CD4-positive, alpha-beta T cell (primary cell): ENCODE measurements at regions of chr13 and their contacts with region 1.

Region 1: GRCh38 chr13:94549232-94550061 is 46.5 kb downstream of the TGDS start:
- DNase-seq: peak; percentile 85 to 96 (median 92)
- ATAC-seq: peak; percentile 91
- H3K4me3 ChIP-seq: peak overlapping the region; percentile 75
- H3K4me3 Mint-ChIP-seq: peak overlapping the region; percentile 96
- H3K27ac ChIP-seq: peak overlapping the region; percentile 85 to 91
- H3K27ac Mint-ChIP-seq: peak overlapping the region; percentile 98
- H3K4me1 ChIP-seq: peaks cover 28% of the 10 kb centered on the region
- H3K4me1 Mint-ChIP-seq: peaks cover 22% of the 10 kb centered on the region
- H3K27me3 ChIP-seq: no peaks in the 10 kb centered on the region
- H3K27me3 Mint-ChIP-seq: peaks cover 7% of the 10 kb centered on the region
- CTCF ChIP-seq: no peak

Region 2: DNA sequence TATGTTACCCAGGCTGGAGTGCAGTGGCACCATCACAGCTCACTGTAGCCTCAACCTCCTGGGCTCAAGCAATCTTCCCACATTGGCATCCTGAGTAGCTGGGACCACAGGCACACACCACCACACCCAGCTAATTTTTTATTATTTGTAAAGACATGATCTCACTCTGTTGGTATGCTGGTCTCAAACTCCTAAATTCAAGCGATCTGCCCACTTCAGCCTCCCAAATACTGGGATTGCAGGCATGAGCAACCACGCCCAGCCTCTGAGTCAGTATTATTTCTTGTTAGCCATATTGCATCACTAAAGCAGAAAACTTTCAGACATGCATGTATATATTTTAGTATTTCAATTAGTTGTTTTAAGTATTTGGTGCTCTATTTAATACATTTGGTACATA is 946.4 kb before region 1 on chr13:
- CTCF ChIA-PET with region 1: no interaction called
- POLR2A ChIA-PET with region 1: no interaction called
- intact Hi-C with region 1: no loop called
- DNase-seq: no peak
- ATAC-seq: no peak
- H3K4me3 ChIP-seq: no peak overlapping the region
- H3K4me3 Mint-ChIP-seq: no peak overlapping the region
- H3K27ac ChIP-seq: no peak overlapping the region
- H3K27ac Mint-ChIP-seq: no peak overlapping the region
- H3K4me1 ChIP-seq: no peaks in the 10 kb centered on the region
- H3K4me1 Mint-ChIP-seq: no peaks in the 10 kb centered on the region
- H3K27me3 ChIP-seq: no peaks in the 10 kb centered on the region
- H3K27me3 Mint-ChIP-seq: no peaks in the 10 kb centered on the region
- CTCF ChIP-seq: no peak

Region 3: DNA sequence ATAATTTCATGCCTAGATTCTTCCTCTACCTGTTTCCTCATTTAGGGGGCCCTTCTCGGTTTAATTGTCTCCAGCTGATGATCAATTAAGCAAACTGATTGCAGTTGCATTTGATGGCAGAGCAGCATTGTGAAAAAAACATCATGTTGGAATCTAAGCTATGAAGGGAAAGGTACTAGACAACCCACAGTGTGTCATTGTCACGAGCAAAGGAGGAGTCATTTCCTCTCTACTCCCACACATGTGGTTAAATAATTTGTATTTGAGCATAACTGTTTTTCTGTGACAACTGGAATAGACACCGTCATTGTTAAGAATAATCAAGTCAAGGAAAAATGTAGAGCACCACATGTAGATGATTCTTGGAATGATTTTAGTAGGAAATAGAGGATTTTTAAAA is 310.3 kb before region 1 on chr13:
- CTCF ChIA-PET with region 1: no interaction called
- POLR2A ChIA-PET with region 1: no interaction called
- intact Hi-C with region 1: no loop called
- DNase-seq: peak in 4 of 14 experiments; percentile 11 to 41 (median 34)
- ATAC-seq: peak; percentile 85
- H3K4me3 ChIP-seq: no peak overlapping the region
- H3K4me3 Mint-ChIP-seq: no peak overlapping the region
- H3K27ac ChIP-seq: no peak overlapping the region
- H3K27ac Mint-ChIP-seq: peak overlapping the region; percentile 31
- H3K4me1 ChIP-seq: peaks cover 7% of the 10 kb centered on the region
- H3K4me1 Mint-ChIP-seq: peaks cover 38% of the 10 kb centered on the region
- H3K27me3 ChIP-seq: no peaks in the 10 kb centered on the region
- H3K27me3 Mint-ChIP-seq: no peaks in the 10 kb centered on the region
- CTCF ChIP-seq: no peak

Region 4: DNA sequence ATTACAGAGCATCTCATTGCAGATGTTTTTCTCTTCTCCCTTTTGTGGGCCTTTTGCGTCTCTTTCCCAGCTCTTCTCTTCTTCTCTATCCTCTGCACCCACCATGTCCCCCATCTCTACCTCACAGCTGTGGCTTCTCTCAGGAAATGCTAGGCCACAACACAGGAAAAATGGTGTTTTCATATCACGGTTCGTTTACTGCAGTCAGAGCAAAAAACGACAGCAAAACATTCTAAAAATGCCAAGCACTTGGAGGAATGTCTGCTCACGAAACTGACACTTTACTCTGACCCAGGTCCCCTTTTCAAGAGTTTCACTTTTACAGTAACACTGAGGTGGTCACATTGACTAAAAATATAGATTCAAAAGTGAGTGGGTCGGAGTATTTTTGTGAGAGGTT is 222.1 kb before region 1 on chr13:
- CTCF ChIA-PET with region 1: no interaction called
- POLR2A ChIA-PET with region 1: interaction called, 8 read pairs
- intact Hi-C with region 1: loop called in 1 of 2 experiments (anchors 10 kb)
- DNase-seq: peak in 4 of 14 experiments; percentile 20 to 59 (median 40)
- ATAC-seq: no peak
- H3K4me3 ChIP-seq: peak overlapping the region; percentile 18
- H3K4me3 Mint-ChIP-seq: peak overlapping the region; percentile 39
- H3K27ac ChIP-seq: no peak overlapping the region
- H3K27ac Mint-ChIP-seq: peak overlapping the region; percentile 38
- H3K4me1 ChIP-seq: peaks cover 76% of the 10 kb centered on the region
- H3K4me1 Mint-ChIP-seq: peaks cover 80% of the 10 kb centered on the region
- H3K27me3 ChIP-seq: no peaks in the 10 kb centered on the region
- H3K27me3 Mint-ChIP-seq: peaks cover 28% of the 10 kb centered on the region
- CTCF ChIP-seq: no peak

Region 5: DNA sequence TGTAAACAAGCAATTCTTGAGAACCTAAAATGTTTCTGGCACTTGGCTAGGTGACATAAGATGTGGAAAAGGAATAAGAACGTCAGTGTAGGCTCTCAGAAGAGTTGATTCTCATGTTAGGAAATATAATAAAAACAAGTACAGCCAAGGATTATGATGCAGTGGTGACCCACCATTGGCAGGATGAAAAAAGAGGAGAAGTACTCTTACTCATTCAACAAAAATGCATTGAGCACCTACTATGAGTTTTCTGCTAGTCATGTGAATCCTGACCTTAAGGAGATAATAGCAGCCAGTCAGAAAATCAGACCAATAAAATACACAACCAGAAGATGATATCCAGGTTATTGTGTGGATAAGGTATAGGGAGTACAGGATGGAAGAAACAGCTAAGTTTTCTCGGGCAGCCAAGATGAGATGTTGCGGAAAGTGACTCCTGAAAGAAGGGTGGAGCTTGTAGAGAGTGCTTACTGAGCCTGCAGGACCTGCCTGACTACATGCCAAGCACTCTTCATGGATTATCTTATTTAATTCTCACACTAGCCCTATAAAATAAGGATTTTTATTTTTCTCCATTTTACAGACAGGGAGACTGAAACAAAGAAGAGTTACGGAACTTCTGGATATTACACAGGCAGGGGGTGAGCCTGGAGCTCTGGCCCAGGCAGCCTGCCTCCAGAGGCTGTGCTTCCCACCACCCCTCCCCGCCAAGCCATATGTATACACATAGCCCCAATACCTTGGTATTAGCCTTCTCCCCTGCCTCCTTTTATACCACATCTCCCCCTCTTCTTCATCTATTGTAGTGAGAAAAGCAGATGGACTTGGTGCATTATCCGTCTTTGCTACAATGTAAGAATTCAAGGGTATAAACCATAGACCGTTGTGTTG is 11.5 kb before region 1 on chr13:
- CTCF ChIA-PET with region 1: interaction called, 3 read pairs
- POLR2A ChIA-PET with region 1: interaction called, 27 read pairs
- intact Hi-C with region 1: no loop called
- DNase-seq: no peak
- ATAC-seq: no peak
- H3K4me3 ChIP-seq: no peak overlapping the region
- H3K4me3 Mint-ChIP-seq: no peak overlapping the region
- H3K27ac ChIP-seq: no peak overlapping the region
- H3K27ac Mint-ChIP-seq: no peak overlapping the region
- H3K4me1 ChIP-seq: peaks cover 11% of the 10 kb centered on the region
- H3K4me1 Mint-ChIP-seq: peaks cover 16% of the 10 kb centered on the region
- H3K27me3 ChIP-seq: no peaks in the 10 kb centered on the region
- H3K27me3 Mint-ChIP-seq: no peaks in the 10 kb centered on the region
- CTCF ChIP-seq: no peak

Region 6: DNA sequence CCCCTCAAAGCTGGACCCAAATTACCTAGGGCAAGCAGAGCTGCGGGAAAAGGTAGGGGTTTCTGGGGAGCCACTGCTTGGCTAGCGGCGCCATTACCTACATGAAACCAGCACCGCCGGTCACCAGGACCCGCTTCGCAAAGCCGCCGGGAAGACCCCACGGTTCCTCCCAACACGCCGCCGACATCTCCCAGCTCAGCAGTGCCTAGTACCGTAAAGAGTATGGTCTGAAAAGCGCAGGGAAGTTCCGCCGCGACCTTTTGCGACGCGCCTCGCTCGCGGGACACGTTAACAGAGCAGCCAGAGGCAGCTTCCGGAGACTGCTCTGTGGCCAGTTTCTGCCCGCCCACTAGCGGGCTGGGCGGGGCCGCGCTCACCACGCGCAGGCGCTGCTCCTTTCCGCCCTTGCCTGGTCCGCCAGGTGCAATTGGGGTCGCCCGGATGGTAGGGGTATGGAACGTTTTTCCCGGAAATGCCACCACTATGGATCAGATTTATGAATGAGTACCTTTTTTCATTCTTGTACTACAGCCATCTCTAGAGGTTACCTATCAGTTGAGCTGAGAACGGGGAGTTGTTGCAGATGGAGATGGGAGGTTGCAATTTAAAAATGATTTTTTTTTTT is 46.6 kb after region 1 on chr13 and contains the start of gene TGDS:
- CTCF ChIA-PET with region 1: interaction called, 4 read pairs
- POLR2A ChIA-PET with region 1: interaction called, 75 read pairs
- intact Hi-C with region 1: loop called (anchors 1 to 2 kb)
- DNase-seq: peak; percentile 69 to 95 (median 83)
- ATAC-seq: peak; percentile 98
- H3K4me3 ChIP-seq: peak within 1 kb of the TSS; percentile 74
- H3K4me3 Mint-ChIP-seq: peak within 1 kb of the TSS; percentile 92
- H3K27ac ChIP-seq: peak within 1 kb of the TSS; percentile 59 to 68
- H3K27ac Mint-ChIP-seq: peak within 1 kb of the TSS; percentile 76
- H3K4me1 ChIP-seq: peaks cover 32% of the 10 kb centered on the region
- H3K4me1 Mint-ChIP-seq: peaks cover 38% of the 10 kb centered on the region
- H3K27me3 ChIP-seq: no peaks in the 10 kb centered on the region
- H3K27me3 Mint-ChIP-seq: no peaks in the 10 kb centered on the region
- CTCF ChIP-seq: no peak
- total RNA-seq, gene TGDS: 4.1 to 4.6 TPM

Region 7: DNA sequence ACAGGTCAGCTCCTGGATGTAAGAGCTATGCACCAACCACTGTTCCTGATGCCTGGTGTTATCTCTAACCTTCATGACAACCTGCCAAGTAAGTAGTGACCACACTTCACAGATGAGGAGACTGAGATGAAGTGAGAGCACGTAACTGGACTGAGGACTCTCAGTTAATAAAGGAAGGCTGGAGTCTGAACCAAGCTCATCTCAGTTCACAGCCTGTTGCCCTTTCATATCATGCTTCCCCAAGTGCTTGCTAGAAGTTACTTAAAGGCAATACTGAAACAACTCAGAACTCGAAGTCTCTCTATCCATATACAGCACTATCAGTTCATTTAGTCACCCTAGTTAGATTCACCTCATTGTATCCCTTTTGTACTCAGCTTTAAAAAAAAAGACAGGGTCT is 632.1 kb after region 1 on chr13:
- CTCF ChIA-PET with region 1: no interaction called
- POLR2A ChIA-PET with region 1: no interaction called
- intact Hi-C with region 1: loop called in 1 of 2 experiments (anchors 10 kb)
- DNase-seq: no peak
- ATAC-seq: no peak
- H3K4me3 ChIP-seq: no peak overlapping the region
- H3K4me3 Mint-ChIP-seq: no peak overlapping the region
- H3K27ac ChIP-seq: no peak overlapping the region
- H3K27ac Mint-ChIP-seq: peak overlapping the region; percentile 93
- H3K4me1 ChIP-seq: peaks cover 52% of the 10 kb centered on the region
- H3K4me1 Mint-ChIP-seq: peaks cover 91% of the 10 kb centered on the region
- H3K27me3 ChIP-seq: no peaks in the 10 kb centered on the region
- H3K27me3 Mint-ChIP-seq: no peaks in the 10 kb centered on the region
- CTCF ChIP-seq: no peak